AG04450 (cell line): ENCODE measurements at regions of chr11 and their contacts with region 1.

Region 1: GRCh38 chr11:10778217-10778970 is 27.3 kb downstream of the CTR9 start:
- DNase-seq: peak; percentile 54
- H3K4me3 ChIP-seq: no peak overlapping the region
- H3K27ac ChIP-seq: peak overlapping the region; percentile 88
- H3K27me3 ChIP-seq: no peaks in the 10 kb centered on the region
- CTCF ChIP-seq: no peak

Region 2: GRCh38 chr11:10792398-10792975 is 14.1 kb after region 1 on chr11:
- CTCF ChIA-PET with region 1: interaction called, 20 read pairs
- POLR2A ChIA-PET with region 1: no interaction called
- DNase-seq: peak; percentile 32
- H3K4me3 ChIP-seq: peak overlapping the region; percentile 30; the same call in 1 of the 2 replicates
- H3K27ac ChIP-seq: no peak overlapping the region
- H3K27me3 ChIP-seq: no peaks in the 10 kb centered on the region
- CTCF ChIP-seq: peak; percentile 85